Naive thymus-derived CD4-positive, alpha-beta T cell (primary cell): ENCODE measurements at regions of chrX and their contacts with region 1.

Region 1: GRCh38 chrX:107701493-107702121 is 73.3 kb downstream of the PRPS1 start:
- DNase-seq: no peak
- ATAC-seq: peak; percentile 74
- H3K4me3 ChIP-seq: no peak overlapping the region
- H3K4me3 Mint-ChIP-seq: no peak overlapping the region
- H3K27ac ChIP-seq: no peak overlapping the region
- H3K27ac Mint-ChIP-seq: peak overlapping the region in 1 of 9 donors; percentile 51
- H3K4me1 ChIP-seq: no peaks in the 10 kb centered on the region
- H3K4me1 Mint-ChIP-seq: peaks cover 17 to 33% (median 25%) of the 10 kb centered on the region in 7 donors
- H3K27me3 ChIP-seq: no peaks in the 10 kb centered on the region
- H3K27me3 Mint-ChIP-seq: peaks cover 0 to 4% (median 0%) of the 10 kb centered on the region in 5 donors

Region 2: GRCh38 chrX:107632346-107632745 is 69.3 kb before region 1 on chrX:
- CTCF ChIA-PET with region 1: no interaction called
- POLR2A ChIA-PET with region 1: no interaction called
- intact Hi-C with region 1: no loop called
- DNase-seq: no peak
- ATAC-seq: no peak
- H3K4me3 ChIP-seq: no peak overlapping the region
- H3K4me3 Mint-ChIP-seq: peak overlapping the region in 1 of 10 donors; percentile 7
- H3K27ac ChIP-seq: no peak overlapping the region
- H3K27ac Mint-ChIP-seq: no peak overlapping the region
- H3K4me1 ChIP-seq: peaks cover 11 to 12% of the 10 kb centered on the region in 2 donors
- H3K4me1 Mint-ChIP-seq: peaks cover 0 to 54% (median 41%) of the 10 kb centered on the region in 7 donors
- H3K27me3 ChIP-seq: no peaks in the 10 kb centered on the region
- H3K27me3 Mint-ChIP-seq: no peaks in the 10 kb centered on the region

Region 3: GRCh38 chrX:107686792-107687191 is 14.8 kb before region 1 on chrX:
- CTCF ChIA-PET with region 1: interaction called, 6 read pairs
- POLR2A ChIA-PET with region 1: interaction called, 1,138 read pairs
- intact Hi-C with region 1: loop called in 1 of 2 experiments (anchors 2 kb)
- DNase-seq: no peak
- ATAC-seq: no peak
- H3K4me3 ChIP-seq: no peak overlapping the region
- H3K4me3 Mint-ChIP-seq: no peak overlapping the region
- H3K27ac ChIP-seq: no peak overlapping the region
- H3K27ac Mint-ChIP-seq: no peak overlapping the region
- H3K4me1 ChIP-seq: peaks cover 0 to 9% of the 10 kb centered on the region in 2 donors
- H3K4me1 Mint-ChIP-seq: peaks cover 20 to 43% (median 30%) of the 10 kb centered on the region in 7 donors
- H3K27me3 ChIP-seq: no peaks in the 10 kb centered on the region
- H3K27me3 Mint-ChIP-seq: no peaks in the 10 kb centered on the region